ENCODE measurements at regions of chr16 and their contacts with region 1.

Region 1: DNA sequence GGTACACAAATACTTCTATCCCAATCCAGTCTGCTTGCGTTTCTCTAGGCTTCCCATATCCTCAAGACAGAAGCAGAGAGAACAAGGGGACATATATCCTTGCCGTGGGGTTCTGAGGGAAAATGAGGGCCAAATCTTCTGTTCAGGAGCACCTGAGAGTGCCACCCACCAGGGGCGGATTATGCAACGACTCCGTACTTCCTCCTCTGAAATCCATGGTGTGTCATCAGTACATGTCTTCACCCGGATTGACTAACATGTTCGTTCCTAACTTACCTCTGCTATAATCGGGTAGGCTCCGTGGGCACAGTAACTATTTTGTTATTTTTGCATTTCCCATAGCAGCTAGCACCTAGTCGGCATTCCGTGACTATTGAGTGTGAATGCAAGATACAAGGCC is 7.8 kb upstream of the ZNF200 start:
- DNase-seq: no peak
- H3K4me3 ChIP-seq: no peak overlapping the region
- H3K27ac ChIP-seq: no peak overlapping the region
- H3K4me1 ChIP-seq: no peaks in the 10 kb centered on the region
- H3K27me3 ChIP-seq: peaks cover 0 to 16% (median 0%) of the 10 kb centered on the region in 3 donors
- CTCF ChIP-seq: no peak
- EP300 ChIP-seq: no peak
- POLR2A ChIP-seq: no peak

Region 2: GRCh38 chr16:2724816-2725348 is 517.8 kb before region 1 on chr16:
- intact Hi-C with region 1: no loop called
- DNase-seq: no peak
- H3K4me3 ChIP-seq: no peak overlapping the region
- H3K27ac ChIP-seq: no peak overlapping the region
- H3K4me1 ChIP-seq: peaks cover 7 to 21% (median 17%) of the 10 kb centered on the region in 4 donors
- H3K27me3 ChIP-seq: peaks cover 0 to 11% (median 8%) of the 10 kb centered on the region in 3 donors
- CTCF ChIP-seq: no peak
- EP300 ChIP-seq: no peak
- POLR2A ChIP-seq: no peak

Region 3: GRCh38 chr16:3292604-3293003 is 49.9 kb after region 1 on chr16:
- intact Hi-C with region 1: loop called (anchors 10 kb)
- DNase-seq: no peak
- H3K4me3 ChIP-seq: no peak overlapping the region
- H3K27ac ChIP-seq: no peak overlapping the region
- H3K4me1 ChIP-seq: no peaks in the 10 kb centered on the region
- H3K27me3 ChIP-seq: no peaks in the 10 kb centered on the region
- CTCF ChIP-seq: no peak
- EP300 ChIP-seq: no peak
- POLR2A ChIP-seq: no peak